ENCODE measurements at regions of chr1 and their contacts with region 1.

Region 1: DNA sequence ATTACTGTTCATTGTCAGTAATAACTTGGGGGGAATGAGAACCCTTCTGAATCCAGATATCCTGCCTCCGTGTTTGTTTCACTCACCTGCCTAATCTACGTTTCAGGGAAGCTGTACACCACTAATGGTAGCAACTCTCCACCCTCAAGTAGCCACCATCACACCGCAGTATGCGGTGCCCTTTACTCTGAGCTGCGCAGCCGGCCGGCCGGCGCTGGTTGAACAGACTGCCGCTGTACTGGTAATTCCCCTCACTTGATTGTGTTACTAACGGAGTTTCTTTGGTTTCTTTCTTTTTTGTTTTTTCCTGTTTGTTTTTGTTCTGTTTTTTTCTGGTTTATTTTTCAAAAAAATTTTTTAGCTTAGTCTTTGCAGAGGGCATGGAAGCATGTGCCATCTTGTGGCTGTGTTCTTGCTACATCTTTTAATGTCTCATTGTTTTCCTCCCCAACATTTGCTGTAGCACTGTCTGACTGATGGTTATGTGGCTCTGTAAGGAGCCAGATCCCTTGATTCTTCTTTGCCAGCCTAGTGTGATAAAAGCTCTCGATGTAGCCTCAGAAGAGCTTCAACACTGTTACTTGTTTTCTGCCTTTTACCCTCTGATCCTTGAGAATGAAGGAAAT is 15.9 kb upstream of the OLFML3 start:
- H3K4me3 Mint-ChIP-seq: no peak overlapping the region
- H3K27ac Mint-ChIP-seq: no peak overlapping the region
- H3K4me1 Mint-ChIP-seq: no peaks in the 10 kb centered on the region
- H3K27me3 Mint-ChIP-seq: no peaks in the 10 kb centered on the region

Region 2: GRCh38 chr1:113123737-113124136 is 839.7 kb before region 1 on chr1:
- intact Hi-C with region 1: loop called (anchors 10 kb)
- H3K4me3 Mint-ChIP-seq: no peak overlapping the region
- H3K27ac Mint-ChIP-seq: no peak overlapping the region
- H3K4me1 Mint-ChIP-seq: no peaks in the 10 kb centered on the region
- H3K27me3 Mint-ChIP-seq: no peaks in the 10 kb centered on the region

Measured in dendritic cell treated with granulocyte-macrophage colony-stimulating factor and Interleukin-4, amounts not matched to agents 40 ng/mL and 50 ng/mL, for 4 days (primary cell).